ENCODE measurements at regions of chr7 and their contacts with region 1.

Region 1: GRCh38 chr7:158704704-158705468 is at the start of gene NCAPG2:
- DNase-seq: peak; percentile 98
- H3K4me3 ChIP-seq: peak within 1 kb of the TSS; percentile 81 to 82
- H3K27ac ChIP-seq: peak within 1 kb of the TSS; percentile 78 to 81
- H3K4me1 ChIP-seq: peaks cover 9% of the 10 kb centered on the region
- H3K27me3 ChIP-seq: no peaks in the 10 kb centered on the region
- CTCF ChIP-seq: peak in 1 of 3 experiments; percentile 62
- POLR2A ChIP-seq: peak; percentile 86
- total RNA-seq, gene NCAPG2: 30.2 to 34.0 TPM

Region 2: GRCh38 chr7:158829342-158830210 is 124.7 kb after region 1 on chr7 and contains the start of gene ESYT2:
- intact Hi-C with region 1: loop called (anchors 10 kb)
- DNase-seq: peak; percentile 99
- H3K4me3 ChIP-seq: peak within 1 kb of the TSS; percentile 89 to 98
- H3K27ac ChIP-seq: peak within 1 kb of the TSS; percentile 98 to 100
- H3K4me1 ChIP-seq: peaks cover 26% of the 10 kb centered on the region
- H3K27me3 ChIP-seq: no peaks in the 10 kb centered on the region
- CTCF ChIP-seq: peak in 1 of 3 experiments; percentile 31
- POLR2A ChIP-seq: peak; percentile 98
- total RNA-seq, gene ESYT2: 61.1 to 73.1 TPM

Measured in testis (tissue), 5 donors.